Endothelial cell of umbilical vein (primary cell): ENCODE measurements at regions of chr10 and their contacts with region 1.

Region 1: DNA sequence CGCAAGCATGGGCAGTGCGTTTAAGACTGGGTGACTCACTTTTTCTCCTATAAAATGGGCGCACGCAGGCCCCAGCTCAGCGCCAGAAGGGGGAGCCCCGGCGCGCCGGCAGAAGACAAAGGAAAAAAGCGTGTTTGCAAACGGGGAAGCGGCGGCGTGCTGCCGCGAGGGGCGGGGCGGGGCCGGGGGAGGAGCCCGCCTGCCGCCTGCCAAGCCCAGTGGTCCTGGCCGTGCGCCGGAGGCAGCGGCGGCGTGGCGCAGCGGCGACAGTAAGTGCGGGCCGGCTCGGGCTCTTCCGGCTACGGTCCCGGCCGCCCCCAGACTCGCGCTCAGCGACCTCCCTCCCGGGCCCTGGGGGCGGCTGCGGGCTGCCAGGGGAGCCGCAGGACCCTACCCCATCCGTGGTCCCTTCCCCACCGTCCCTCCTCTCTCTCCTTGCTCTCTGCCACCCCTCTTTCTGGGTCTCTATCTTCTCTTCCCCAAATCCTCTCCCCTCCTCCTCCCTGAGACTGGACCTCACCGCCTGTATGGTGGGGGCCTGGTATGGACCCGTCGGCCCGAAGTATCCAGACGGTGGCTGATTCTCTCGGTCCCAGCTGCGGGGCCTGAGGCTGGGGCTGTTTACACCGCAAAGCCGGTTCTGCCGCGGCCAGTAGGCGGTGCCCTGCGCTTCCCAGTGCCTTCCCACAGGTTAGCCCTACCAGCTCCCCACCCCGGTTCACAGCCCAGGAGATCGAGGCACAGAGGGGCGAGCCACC is at the start of gene SLC29A3:
- DNase-seq: peak; percentile 83
- H3K4me3 ChIP-seq: peak within 1 kb of the TSS; percentile 63 to 69 (median 65)
- H3K27ac ChIP-seq: peak within 1 kb of the TSS; percentile 60
- H3K4me1 ChIP-seq: peaks cover 3% of the 10 kb centered on the region
- H3K27me3 ChIP-seq: peaks cover 0 to 1% of the 10 kb centered on the region in 2 experiments
- CTCF ChIP-seq: peak; percentile 79 to 89
- POLR2A ChIP-seq: peak; percentile 68
- total RNA-seq, gene SLC29A3: 3.5 and 5.0 TPM in 2 replicates

Region 2: DNA sequence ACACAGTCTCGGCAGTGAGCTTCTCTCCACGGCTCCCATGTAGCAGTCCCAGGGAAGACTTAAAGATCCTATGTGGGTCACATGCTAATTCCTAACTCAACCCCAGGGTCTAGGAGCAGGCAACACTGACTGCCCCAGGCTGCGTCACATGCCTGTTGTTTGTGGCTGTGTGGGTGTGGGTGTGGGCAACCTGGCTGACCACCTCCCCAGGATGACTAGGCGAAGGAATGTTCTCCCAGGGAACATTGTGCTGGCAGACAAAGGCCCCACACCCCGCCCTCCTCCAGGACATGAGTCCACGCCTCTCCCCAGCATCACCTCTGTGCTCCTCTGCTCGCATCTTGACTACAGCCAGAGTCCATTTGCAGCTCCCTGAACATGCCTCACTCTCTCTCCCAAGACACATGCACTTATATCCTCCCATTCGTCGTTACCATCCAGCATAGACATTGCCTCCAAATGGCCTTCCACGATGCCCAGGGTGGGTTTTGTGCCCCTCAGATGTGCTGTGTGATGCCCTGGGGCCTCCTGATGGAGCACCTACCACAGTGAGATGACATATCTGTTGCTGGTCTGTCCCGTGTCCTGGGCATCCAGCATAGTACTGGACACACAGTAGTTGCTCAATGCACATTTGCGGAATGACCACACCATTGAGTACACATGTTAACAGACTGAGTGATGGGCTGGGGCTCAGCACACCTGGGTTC is 30.3 kb after region 1 on chr10:
- CTCF ChIA-PET with region 1: interaction called, 11 read pairs
- POLR2A ChIA-PET with region 1: no interaction called
- dilution Hi-C with region 1: no loop called
- intact Hi-C with region 1: no loop called
- DNase-seq: no peak
- H3K4me3 ChIP-seq: no peak overlapping the region
- H3K27ac ChIP-seq: no peak overlapping the region
- H3K4me1 ChIP-seq: peaks cover 2% of the 10 kb centered on the region
- H3K27me3 ChIP-seq: no peaks in the 10 kb centered on the region
- CTCF ChIP-seq: no peak
- POLR2A ChIP-seq: no peak

Region 3: GRCh38 chr10:71569775-71570588 is 250.8 kb after region 1 on chr10:
- CTCF ChIA-PET with region 1: interaction called, 111 read pairs
- POLR2A ChIA-PET with region 1: no interaction called
- dilution Hi-C with region 1: no loop called
- intact Hi-C with region 1: loop called (anchors 1 kb)
- DNase-seq: peak; percentile 43
- H3K4me3 ChIP-seq: no peak overlapping the region
- H3K27ac ChIP-seq: no peak overlapping the region
- H3K4me1 ChIP-seq: no peaks in the 10 kb centered on the region
- H3K27me3 ChIP-seq: peaks cover 2 to 4% of the 10 kb centered on the region in 2 experiments
- CTCF ChIP-seq: peak; percentile 71 to 81
- POLR2A ChIP-seq: no peak

Region 4: DNA sequence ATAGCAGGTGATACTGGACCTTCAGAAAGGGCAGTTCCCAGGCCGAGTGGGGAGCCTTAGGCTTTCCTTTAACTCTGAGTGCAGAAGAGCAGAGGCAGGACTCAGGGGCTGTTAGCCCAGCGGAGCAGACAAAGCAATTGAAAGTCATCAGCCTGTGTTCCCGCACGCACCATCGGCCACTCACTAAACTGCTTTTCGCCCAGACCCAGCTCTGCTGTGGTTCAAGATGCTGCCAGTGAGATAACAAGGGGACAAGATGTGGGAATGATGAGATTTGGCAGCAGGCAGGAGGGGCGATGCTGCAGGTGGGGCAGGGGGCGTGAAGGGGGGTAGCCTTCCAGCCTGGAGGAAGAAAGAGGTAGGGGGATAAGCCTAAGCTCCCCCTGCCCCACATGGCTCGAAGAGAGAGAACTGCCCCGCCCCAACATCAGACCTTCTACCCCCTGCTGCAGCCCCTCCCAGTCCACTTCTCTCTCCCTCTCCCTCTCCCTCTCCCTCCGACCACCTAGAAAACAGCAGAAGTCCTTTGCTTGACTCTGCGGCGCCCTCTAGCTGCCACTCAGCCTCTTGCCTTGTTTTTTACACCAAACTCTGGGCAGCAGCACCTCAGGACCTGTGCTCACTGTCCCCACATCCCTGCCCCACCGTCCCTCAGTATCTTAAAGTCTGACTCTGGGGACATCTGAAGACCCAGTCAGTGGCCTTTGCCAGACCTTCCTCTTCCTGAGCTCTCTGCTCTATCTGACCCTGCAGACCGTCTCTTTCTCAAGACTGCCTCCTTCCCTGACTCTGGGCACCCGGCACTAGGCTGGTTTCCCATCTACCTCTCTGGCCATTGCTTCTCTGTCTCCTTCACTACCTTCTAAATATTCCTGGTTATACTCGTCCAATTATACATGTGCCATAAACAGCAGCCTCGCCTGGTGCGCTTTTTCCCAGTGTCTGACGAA is 289.9 kb after region 1 on chr10:
- CTCF ChIA-PET with region 1: interaction called, 11 read pairs
- POLR2A ChIA-PET with region 1: no interaction called
- dilution Hi-C with region 1: no loop called
- intact Hi-C with region 1: loop called (anchors 2 kb)
- DNase-seq: peak; percentile 54
- H3K4me3 ChIP-seq: no peak overlapping the region
- H3K27ac ChIP-seq: no peak overlapping the region
- H3K4me1 ChIP-seq: no peaks in the 10 kb centered on the region
- H3K27me3 ChIP-seq: peaks cover 3 to 4% of the 10 kb centered on the region in 2 experiments
- CTCF ChIP-seq: peak; percentile 74 to 89
- POLR2A ChIP-seq: no peak

Region 5: DNA sequence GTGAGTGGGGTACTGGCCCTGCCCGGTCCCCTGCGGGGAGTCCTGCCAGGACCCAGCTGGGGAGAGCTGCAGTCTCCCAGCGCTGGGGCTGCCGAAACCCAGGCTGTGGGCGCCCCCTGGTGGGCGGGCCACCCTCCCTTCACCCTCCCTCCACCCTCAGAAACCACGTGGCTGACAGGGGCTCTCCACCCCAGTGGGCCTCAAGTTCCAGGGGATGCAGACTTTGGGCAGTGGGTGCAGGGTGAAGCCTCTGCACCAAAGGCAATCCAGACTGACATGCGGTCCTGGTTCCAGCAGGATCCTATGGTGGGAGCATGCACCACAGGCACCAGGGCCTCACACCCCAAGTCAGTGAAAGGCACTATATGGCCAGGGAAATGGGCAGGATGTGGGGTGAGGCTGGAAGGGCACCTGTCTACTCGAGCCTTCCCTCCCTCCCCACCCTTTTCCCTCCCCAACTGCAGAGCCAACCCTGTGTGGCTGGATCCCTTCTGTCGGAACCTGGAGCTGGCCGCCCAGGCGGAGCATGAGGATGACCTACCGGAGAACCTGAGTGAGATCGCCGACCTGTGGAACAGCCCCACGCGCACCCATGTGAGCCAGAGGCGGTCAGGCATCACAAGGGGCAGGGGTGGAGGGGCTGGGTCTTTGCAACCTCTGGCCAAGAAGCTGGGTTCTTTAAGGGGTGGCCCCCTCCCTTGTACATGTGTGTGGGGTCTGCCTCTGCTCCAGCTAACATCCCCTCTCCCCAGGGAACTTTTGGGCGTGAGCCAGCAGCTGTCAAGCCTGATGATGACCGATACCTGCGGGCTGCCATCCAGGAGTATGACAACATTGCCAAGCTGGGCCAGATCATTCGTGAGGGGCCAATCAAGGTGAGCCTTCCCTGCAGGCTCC is 493.0 kb after region 1 on chr10:
- CTCF ChIA-PET with region 1: interaction called, 14 read pairs
- POLR2A ChIA-PET with region 1: interaction called, 5 read pairs
- dilution Hi-C with region 1: no loop called
- intact Hi-C with region 1: loop called (anchors 5 kb)
- DNase-seq: peak; percentile 46
- H3K4me3 ChIP-seq: no peak overlapping the region
- H3K27ac ChIP-seq: no peak overlapping the region
- H3K4me1 ChIP-seq: no peaks in the 10 kb centered on the region
- H3K27me3 ChIP-seq: no peaks in the 10 kb centered on the region
- CTCF ChIP-seq: peak; percentile 89 to 92
- POLR2A ChIP-seq: no peak